ENCODE measurements at regions of chr5 and their contacts with region 1.

Region 1: DNA sequence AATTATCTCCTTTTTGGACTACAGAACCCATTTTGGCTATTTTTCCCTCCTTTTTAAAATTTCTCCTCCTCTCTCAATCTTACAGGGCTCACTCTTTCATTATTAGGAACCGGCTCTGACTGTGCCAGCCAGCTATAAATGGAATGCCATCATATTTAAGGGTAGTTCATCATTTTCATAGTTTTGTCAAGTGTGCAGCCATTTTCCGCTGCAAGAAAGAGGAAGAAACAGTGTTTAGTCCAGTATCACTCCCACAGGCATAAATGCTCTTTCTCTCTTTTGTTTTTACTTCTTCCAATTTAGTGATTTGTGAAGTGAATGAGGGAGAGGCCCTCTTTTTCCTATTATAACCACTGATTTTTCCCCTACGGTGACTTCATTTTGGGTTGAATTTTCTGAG is 290.0 kb downstream of the NR3C1 start:
- DNase-seq: no peak
- H3K4me3 ChIP-seq: no peak overlapping the region
- H3K27ac ChIP-seq: no peak overlapping the region
- H3K4me1 ChIP-seq: peaks cover 10% of the 10 kb centered on the region
- H3K27me3 ChIP-seq: no peaks in the 10 kb centered on the region
- CTCF ChIP-seq: no peak

Region 2: DNA sequence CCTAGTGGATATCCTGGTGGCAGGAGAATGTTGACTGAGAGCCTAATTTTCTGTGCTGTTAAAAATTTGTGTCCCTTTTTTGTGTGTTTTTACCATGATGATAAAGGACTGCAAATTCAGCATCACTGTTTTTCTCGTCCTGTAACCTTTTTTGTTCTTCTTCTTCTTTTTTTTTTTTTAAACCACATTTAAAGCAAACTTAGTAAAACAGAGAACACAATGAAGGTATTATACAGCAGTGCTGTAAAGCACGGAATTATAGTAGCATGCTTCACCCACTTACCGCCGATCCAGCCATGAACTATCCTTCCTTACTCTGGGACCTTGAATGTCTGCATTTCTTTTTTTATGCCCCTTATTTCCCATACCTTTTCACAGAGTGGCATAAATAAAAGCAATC is 63.3 kb before region 1 on chr5:
- CTCF ChIA-PET with region 1: interaction called, 10 read pairs
- dilution Hi-C with region 1: no loop called
- in situ Hi-C with region 1: no loop called
- intact Hi-C with region 1: no loop called
- DNase-seq: no peak
- H3K4me3 ChIP-seq: no peak overlapping the region
- H3K27ac ChIP-seq: no peak overlapping the region
- H3K4me1 ChIP-seq: peaks cover 10% of the 10 kb centered on the region
- H3K27me3 ChIP-seq: no peaks in the 10 kb centered on the region
- CTCF ChIP-seq: no peak